ENCODE measurements at regions of chr2 and their contacts with region 1.

Region 1: DNA sequence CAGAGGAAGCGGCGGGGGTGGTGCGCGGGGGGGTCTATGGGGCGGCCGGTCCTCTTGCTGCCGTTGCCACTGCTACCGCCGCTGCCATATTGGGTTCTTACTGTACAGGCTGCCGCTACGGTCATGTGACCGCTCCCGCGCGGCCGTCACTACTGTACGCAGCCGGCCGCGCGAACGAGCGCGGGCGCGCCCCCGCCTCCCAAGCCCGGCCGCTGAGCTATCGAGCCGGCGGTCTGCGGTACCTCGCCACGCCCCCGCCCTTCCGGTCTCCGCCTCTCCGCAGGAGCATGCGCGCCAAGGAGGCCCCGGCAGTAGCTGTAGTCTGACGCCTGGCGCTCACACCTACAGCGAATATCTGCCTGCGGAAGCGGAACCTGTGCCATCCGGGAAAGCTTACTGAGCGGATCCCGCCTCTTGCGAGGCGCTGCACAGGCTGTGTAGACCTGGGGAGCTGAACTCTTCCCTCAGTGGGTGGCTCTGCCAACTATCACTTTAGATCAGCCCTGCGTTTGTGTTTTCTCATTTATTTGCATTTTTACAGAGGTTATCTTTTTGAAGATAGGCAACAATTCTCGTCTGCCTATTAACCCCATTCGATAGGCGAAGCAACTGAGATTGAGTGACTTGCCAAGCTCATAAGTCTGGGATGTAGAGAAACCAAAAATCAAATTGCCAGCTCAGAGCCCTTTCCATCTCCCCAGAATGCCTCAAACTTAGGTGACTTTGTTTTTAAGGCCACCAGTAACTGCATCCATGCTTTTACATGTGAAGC is at the start of gene ASXL2:
- DNase-seq: peak; percentile 93 to 100 (median 97)
- ATAC-seq: peak; percentile 86
- H3K4me3 ChIP-seq: peak within 1 kb of the TSS; percentile 99
- H3K4me3 Mint-ChIP-seq: peak within 1 kb of the TSS; percentile 93
- H3K27ac ChIP-seq: peak within 1 kb of the TSS; percentile 98 to 99
- H3K27ac Mint-ChIP-seq: peak within 1 kb of the TSS; percentile 93
- H3K4me1 ChIP-seq: peaks cover 15% of the 10 kb centered on the region
- H3K4me1 Mint-ChIP-seq: peaks cover 44% of the 10 kb centered on the region
- H3K27me3 ChIP-seq: no peaks in the 10 kb centered on the region
- H3K27me3 Mint-ChIP-seq: no peaks in the 10 kb centered on the region
- CTCF ChIP-seq: no peak
- total RNA-seq, gene ASXL2: 15.1 to 17.2 TPM

Region 2: GRCh38 chr2:24792874-24793760 is 1085.4 kb before region 1 on chr2 and contains the starts of genes CENPO and PTRHD1:
- CTCF ChIA-PET with region 1: no interaction called
- POLR2A ChIA-PET with region 1: no interaction called
- intact Hi-C with region 1: loop called in 1 of 2 experiments (anchors 10 kb)
- DNase-seq: peak; percentile 91 to 97 (median 93)
- ATAC-seq: peak; percentile 96
- H3K4me3 ChIP-seq: peak within 1 kb of the TSS; percentile 88
- H3K4me3 Mint-ChIP-seq: peak within 1 kb of the TSS; percentile 97
- H3K27ac ChIP-seq: peak within 1 kb of the TSS; percentile 95 to 97
- H3K27ac Mint-ChIP-seq: peak within 1 kb of the TSS; percentile 99
- H3K4me1 ChIP-seq: peaks cover 13% of the 10 kb centered on the region
- H3K4me1 Mint-ChIP-seq: peaks cover 21% of the 10 kb centered on the region
- H3K27me3 ChIP-seq: no peaks in the 10 kb centered on the region
- H3K27me3 Mint-ChIP-seq: no peaks in the 10 kb centered on the region
- CTCF ChIP-seq: peak; percentile 60
- total RNA-seq, gene CENPO: 3.4 to 3.5 TPM
- total RNA-seq, gene PTRHD1: 15.3 to 15.7 TPM

Region 3: GRCh38 chr2:25794544-25795276 is 83.8 kb before region 1 on chr2:
- CTCF ChIA-PET with region 1: no interaction called
- POLR2A ChIA-PET with region 1: interaction called, 15 read pairs
- intact Hi-C with region 1: no loop called
- DNase-seq: peak in 4 of 14 experiments; percentile 10 to 75 (median 57)
- ATAC-seq: peak; percentile 84
- H3K4me3 ChIP-seq: peak overlapping the region; percentile 43
- H3K4me3 Mint-ChIP-seq: peak overlapping the region; percentile 91
- H3K27ac ChIP-seq: peak overlapping the region; percentile 64 to 87
- H3K27ac Mint-ChIP-seq: peak overlapping the region; percentile 97
- H3K4me1 ChIP-seq: peaks cover 23% of the 10 kb centered on the region
- H3K4me1 Mint-ChIP-seq: peaks cover 91% of the 10 kb centered on the region
- H3K27me3 ChIP-seq: no peaks in the 10 kb centered on the region
- H3K27me3 Mint-ChIP-seq: no peaks in the 10 kb centered on the region
- CTCF ChIP-seq: no peak

Region 4: GRCh38 chr2:25912851-25913695 is 34.5 kb after region 1 on chr2:
- CTCF ChIA-PET with region 1: no interaction called
- POLR2A ChIA-PET with region 1: interaction called, 11 read pairs
- intact Hi-C with region 1: loop called in 1 of 2 experiments (anchors 2 kb)
- DNase-seq: no peak
- ATAC-seq: peak; percentile 56
- H3K4me3 ChIP-seq: no peak overlapping the region
- H3K4me3 Mint-ChIP-seq: no peak overlapping the region
- H3K27ac ChIP-seq: no peak overlapping the region
- H3K27ac Mint-ChIP-seq: no peak overlapping the region
- H3K4me1 ChIP-seq: peaks cover 10% of the 10 kb centered on the region
- H3K4me1 Mint-ChIP-seq: peaks cover 24% of the 10 kb centered on the region
- H3K27me3 ChIP-seq: no peaks in the 10 kb centered on the region
- H3K27me3 Mint-ChIP-seq: no peaks in the 10 kb centered on the region
- CTCF ChIP-seq: no peak

Region 5: GRCh38 chr2:25972049-25972823 is 93.7 kb after region 1 on chr2:
- CTCF ChIA-PET with region 1: no interaction called
- POLR2A ChIA-PET with region 1: no interaction called
- intact Hi-C with region 1: no loop called
- DNase-seq: no peak
- ATAC-seq: no peak
- H3K4me3 ChIP-seq: no peak overlapping the region
- H3K4me3 Mint-ChIP-seq: no peak overlapping the region
- H3K27ac ChIP-seq: no peak overlapping the region
- H3K27ac Mint-ChIP-seq: no peak overlapping the region
- H3K4me1 ChIP-seq: no peaks in the 10 kb centered on the region
- H3K4me1 Mint-ChIP-seq: peaks cover 4% of the 10 kb centered on the region
- H3K27me3 ChIP-seq: no peaks in the 10 kb centered on the region
- H3K27me3 Mint-ChIP-seq: no peaks in the 10 kb centered on the region
- CTCF ChIP-seq: no peak

Region 6: DNA sequence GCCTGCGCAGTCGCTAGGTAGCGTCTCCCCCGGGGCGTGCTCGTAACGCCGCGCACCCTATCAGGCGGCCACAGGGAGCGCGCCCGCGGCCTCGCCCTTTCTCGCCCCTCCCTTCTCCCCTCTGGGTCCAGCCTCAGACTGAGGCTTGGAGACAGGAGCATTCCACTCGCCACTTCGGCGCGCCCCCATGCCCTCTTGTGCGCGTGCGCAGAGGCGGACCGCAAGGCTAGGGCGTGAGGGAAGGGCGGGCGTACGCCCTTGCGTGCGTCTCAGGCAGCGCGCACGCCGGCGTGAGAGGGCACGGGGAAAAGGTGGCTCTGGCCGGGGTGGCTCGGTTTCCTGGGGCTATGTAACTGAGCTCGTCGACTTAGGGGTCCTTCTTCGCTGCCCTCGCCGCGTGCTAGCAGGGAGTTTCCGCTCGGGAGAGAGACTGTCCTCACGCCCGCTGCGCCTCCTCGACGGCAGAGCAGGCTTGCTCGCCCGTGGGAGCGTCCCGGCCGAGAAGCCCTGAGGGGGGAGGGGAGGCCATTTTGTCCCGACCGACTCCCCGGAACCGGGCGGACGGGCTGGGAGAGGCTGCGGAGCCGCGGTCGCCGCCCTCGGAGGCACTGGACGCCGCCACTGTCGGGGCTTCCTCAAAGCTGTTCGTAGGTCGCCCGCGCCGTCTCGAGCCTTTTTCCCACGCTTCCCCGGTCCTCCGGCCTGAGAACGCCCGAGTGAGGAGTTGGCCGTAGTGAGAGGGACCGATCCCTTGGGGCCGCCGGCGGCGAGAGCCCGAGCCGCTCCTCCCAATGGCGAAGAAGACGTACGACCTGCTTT is 155.5 kb after region 1 on chr2 and contains the start of gene RAB10:
- CTCF ChIA-PET with region 1: no interaction called
- POLR2A ChIA-PET with region 1: interaction called, 19 read pairs
- intact Hi-C with region 1: loop called (anchors 2 to 5 kb)
- DNase-seq: peak; percentile 97 to 100 (median 99)
- ATAC-seq: peak; percentile 88
- H3K4me3 ChIP-seq: peak within 1 kb of the TSS; percentile 78
- H3K4me3 Mint-ChIP-seq: peak within 1 kb of the TSS; percentile 98
- H3K27ac ChIP-seq: peak within 1 kb of the TSS; percentile 91
- H3K27ac Mint-ChIP-seq: peak within 1 kb of the TSS; percentile 97
- H3K4me1 ChIP-seq: peaks cover 39% of the 10 kb centered on the region
- H3K4me1 Mint-ChIP-seq: peaks cover 43% of the 10 kb centered on the region
- H3K27me3 ChIP-seq: no peaks in the 10 kb centered on the region
- H3K27me3 Mint-ChIP-seq: no peaks in the 10 kb centered on the region
- CTCF ChIP-seq: no peak
- total RNA-seq, gene RAB10: 13.5 to 13.8 TPM

Region 7: GRCh38 chr2:26244309-26245121 is 366.0 kb after region 1 on chr2 and contains the starts of genes HADHA and HADHB:
- CTCF ChIA-PET with region 1: no interaction called
- POLR2A ChIA-PET with region 1: interaction called, 6 read pairs
- intact Hi-C with region 1: loop called in 1 of 2 experiments (anchors 2 kb)
- DNase-seq: peak; percentile 68 to 93 (median 80)
- ATAC-seq: peak; percentile 81
- H3K4me3 ChIP-seq: peak within 1 kb of the TSS; percentile 96
- H3K4me3 Mint-ChIP-seq: peak within 1 kb of the TSS; percentile 100
- H3K27ac ChIP-seq: peak within 1 kb of the TSS; percentile 95 to 98
- H3K27ac Mint-ChIP-seq: peak within 1 kb of the TSS; percentile 97
- H3K4me1 ChIP-seq: peaks cover 33% of the 10 kb centered on the region
- H3K4me1 Mint-ChIP-seq: peaks cover 76% of the 10 kb centered on the region
- H3K27me3 ChIP-seq: no peaks in the 10 kb centered on the region
- H3K27me3 Mint-ChIP-seq: no peaks in the 10 kb centered on the region
- CTCF ChIP-seq: no peak
- total RNA-seq, gene HADHA: 72.4 to 73.7 TPM
- total RNA-seq, gene HADHB: 25.2 to 30.3 TPM

Region 8: DNA sequence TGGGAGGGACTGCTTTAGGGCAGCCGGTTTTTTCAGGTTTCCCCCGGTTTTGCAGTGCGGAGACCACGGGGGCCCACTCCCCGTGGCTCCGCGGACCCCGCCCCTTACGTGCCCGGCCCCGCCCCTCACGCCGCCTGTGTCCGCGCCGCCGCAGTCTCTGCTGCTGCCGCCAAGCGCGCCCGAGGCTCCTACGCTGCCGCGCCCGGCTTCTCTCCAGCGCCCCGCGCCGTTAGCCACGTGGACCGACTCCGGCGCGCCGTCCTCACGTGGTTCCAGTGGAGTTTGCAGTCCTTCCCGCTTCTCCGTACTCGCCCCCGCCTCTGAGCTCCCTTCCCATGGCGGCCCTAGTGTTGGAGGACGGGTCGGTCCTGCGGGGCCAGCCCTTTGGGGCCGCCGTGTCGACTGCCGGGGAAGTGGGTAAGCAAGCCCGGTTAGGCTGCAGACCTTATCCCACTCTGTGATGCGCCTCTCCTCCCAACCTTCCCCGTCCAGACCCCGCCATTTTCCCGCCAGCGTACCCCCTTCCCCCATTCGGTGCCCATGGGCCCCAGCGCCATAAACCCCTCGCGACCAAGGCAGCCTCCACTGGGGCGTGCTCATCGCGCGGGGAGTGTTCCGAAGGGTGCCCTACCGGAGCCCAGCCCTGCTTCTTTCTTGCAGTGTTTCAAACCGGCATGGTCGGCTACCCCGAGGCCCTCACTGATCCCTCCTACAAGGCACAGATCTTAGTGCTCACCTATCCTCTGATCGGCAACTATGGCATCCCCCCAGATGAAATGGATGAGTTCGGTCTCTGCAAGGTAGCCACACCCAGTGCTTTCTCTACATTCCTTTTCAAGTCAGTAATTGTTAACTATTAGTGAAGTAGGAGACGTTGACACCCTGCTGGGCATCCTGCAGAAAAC is 1338.9 kb after region 1 on chr2 and contains the start of gene CAD:
- CTCF ChIA-PET with region 1: no interaction called
- POLR2A ChIA-PET with region 1: no interaction called
- intact Hi-C with region 1: loop called in 1 of 2 experiments (anchors 10 kb)
- DNase-seq: peak; percentile 75 to 94 (median 84)
- ATAC-seq: peak; percentile 74
- H3K4me3 ChIP-seq: peak within 1 kb of the TSS; percentile 87
- H3K4me3 Mint-ChIP-seq: peak within 1 kb of the TSS; percentile 98
- H3K27ac ChIP-seq: peak within 1 kb of the TSS; percentile 67 to 75
- H3K27ac Mint-ChIP-seq: peak within 1 kb of the TSS; percentile 93
- H3K4me1 ChIP-seq: peaks cover 31% of the 10 kb centered on the region
- H3K4me1 Mint-ChIP-seq: peaks cover 45% of the 10 kb centered on the region
- H3K27me3 ChIP-seq: no peaks in the 10 kb centered on the region
- H3K27me3 Mint-ChIP-seq: no peaks in the 10 kb centered on the region
- CTCF ChIP-seq: no peak
- total RNA-seq, gene CAD: 20.0 to 20.3 TPM

Measured in CD4-positive, alpha-beta T cell (primary cell).